ENCODE measurements at regions of chr6 and their contacts with region 1.

Region 1: GRCh38 chr6:13360671-13361550 is 32.6 kb upstream of the TBC1D7 start:
- DNase-seq: peak; percentile 44 to 89 (median 69)
- ATAC-seq: peak; percentile 85 to 92 (median 90)
- H3K4me3 ChIP-seq: no peak overlapping the region
- H3K27ac ChIP-seq: peak overlapping the region; percentile 18 to 84 (median 60)
- H3K4me1 ChIP-seq: peaks cover 11 to 71% (median 40%) of the 10 kb centered on the region in 12 donors
- H3K27me3 ChIP-seq: no peaks in the 10 kb centered on the region
- CTCF ChIP-seq: no peak
- POLR2A ChIP-seq: no peak

Region 2: DNA sequence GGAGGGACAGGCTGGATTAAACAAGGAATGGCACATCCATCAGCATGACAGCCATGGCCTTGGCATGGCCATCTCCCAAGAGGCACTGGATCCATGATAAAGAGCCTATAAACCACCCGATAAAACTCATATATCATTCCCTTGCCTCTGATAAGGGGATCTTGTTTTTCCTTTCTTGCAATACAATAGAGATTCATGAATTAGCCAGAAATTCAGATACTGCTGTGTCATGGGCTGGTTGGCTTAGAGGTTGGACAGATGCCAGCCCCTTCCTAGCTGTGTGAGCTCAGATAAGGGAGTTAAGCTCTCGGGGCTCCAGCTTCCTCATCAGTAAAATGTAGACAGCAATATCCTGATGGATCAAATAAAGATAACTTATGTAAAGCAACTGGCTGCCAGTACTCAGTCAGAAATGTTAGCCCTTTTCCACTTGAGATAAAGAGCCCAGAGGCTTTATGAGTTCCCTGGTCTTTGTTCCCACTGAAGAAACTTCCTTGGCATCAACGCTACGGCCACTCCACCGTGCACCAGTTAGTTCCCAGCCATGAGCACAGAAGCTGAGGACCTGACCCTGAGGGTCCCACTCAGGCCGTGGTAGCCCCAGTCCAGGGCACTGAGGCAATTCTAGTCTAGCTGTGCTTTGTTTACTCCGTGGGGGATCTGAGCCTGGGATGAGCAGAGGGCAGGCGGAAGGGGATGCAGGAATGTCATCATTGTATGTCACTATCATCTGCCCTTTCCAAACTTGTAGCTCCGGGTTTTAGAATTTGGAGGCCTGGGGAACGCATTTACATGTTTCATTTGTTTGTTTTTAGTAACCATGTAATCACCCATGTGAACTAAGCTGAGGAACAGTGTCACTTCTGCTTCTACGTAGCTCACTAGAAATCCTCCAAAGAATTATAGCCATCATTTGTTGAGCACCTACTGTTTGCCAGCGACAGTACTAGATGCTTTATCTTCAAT is 34.6 kb after region 1 on chr6:
- intact Hi-C with region 1: loop called in 4 of 10 experiments (anchors 5 to 10 kb)
- DNase-seq: peak; percentile 76 to 83 (median 78)
- ATAC-seq: peak; percentile 33 to 82 (median 76)
- H3K4me3 ChIP-seq: no peak overlapping the region
- H3K27ac ChIP-seq: peak overlapping the region in 11 of 12 donors; percentile 24 to 84 (median 70)
- H3K4me1 ChIP-seq: peaks cover 7 to 60% (median 46%) of the 10 kb centered on the region in 12 donors
- H3K27me3 ChIP-seq: no peaks in the 10 kb centered on the region
- CTCF ChIP-seq: no peak
- POLR2A ChIP-seq: no peak

Region 3: GRCh38 chr6:13407709-13408695 is 47.1 kb after region 1 on chr6:
- intact Hi-C with region 1: loop called in 4 of 10 experiments (anchors 5 to 10 kb)
- DNase-seq: no peak
- ATAC-seq: peak in 3 of 4 donors; percentile 36 to 63 (median 38)
- H3K4me3 ChIP-seq: no peak overlapping the region
- H3K27ac ChIP-seq: peak overlapping the region; percentile 42 to 93 (median 78)
- H3K4me1 ChIP-seq: peaks cover 22 to 96% (median 84%) of the 10 kb centered on the region in 12 donors
- H3K27me3 ChIP-seq: no peaks in the 10 kb centered on the region
- CTCF ChIP-seq: no peak
- POLR2A ChIP-seq: peak in 1 of 2 donors; percentile 17

Measured in heart left ventricle (tissue), 16 donors.